CD8-positive, alpha-beta T cell (primary cell): ENCODE measurements at regions of chr15 and their contacts with region 1.

Region 1: DNA sequence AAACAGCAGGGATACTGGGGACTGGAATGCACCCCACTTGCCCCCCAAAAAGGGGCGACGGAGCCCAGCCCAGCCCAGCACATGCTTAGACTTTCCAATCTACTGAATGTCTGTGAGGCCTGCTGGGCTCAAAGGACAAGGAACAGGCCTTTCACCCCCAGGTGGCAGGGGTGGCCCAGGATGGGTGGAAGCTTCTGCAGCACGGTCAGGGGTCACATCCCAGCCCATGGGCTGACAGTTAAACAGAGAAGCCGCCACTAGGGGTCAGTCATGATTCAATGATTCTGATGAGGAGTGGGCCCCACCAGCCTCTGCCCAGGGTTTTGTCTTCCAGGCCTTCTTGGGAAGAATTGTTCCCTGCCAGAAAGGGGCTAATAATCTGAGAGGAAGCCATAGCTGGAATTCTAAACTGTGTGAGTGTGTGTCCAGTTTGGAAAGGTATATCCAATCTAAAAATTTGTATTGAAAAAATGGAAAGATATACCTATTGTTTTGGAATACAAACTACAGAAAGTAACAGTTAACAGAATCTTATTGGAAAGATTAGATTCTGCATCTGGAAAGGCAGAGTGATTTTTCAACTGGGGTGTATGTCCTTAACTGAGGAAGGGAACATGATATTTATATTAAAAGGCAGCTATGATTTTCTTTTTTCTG is 2.2 kb downstream of the CHRNB4 start:
- DNase-seq: peak in 6 of 9 experiments; percentile 28 to 57 (median 42)
- ATAC-seq: peak; percentile 58
- H3K4me3 ChIP-seq: no peak overlapping the region
- H3K4me3 Mint-ChIP-seq: no peak overlapping the region
- H3K27ac ChIP-seq: no peak overlapping the region
- H3K27ac Mint-ChIP-seq: no peak overlapping the region
- H3K4me1 ChIP-seq: peaks cover 13% of the 10 kb centered on the region
- H3K4me1 Mint-ChIP-seq: peaks cover 8% of the 10 kb centered on the region
- H3K27me3 ChIP-seq: peaks cover 0 to 7% of the 10 kb centered on the region in 2 experiments
- H3K27me3 Mint-ChIP-seq: peaks cover 12% of the 10 kb centered on the region
- CTCF ChIP-seq: peak; percentile 47

Region 2: DNA sequence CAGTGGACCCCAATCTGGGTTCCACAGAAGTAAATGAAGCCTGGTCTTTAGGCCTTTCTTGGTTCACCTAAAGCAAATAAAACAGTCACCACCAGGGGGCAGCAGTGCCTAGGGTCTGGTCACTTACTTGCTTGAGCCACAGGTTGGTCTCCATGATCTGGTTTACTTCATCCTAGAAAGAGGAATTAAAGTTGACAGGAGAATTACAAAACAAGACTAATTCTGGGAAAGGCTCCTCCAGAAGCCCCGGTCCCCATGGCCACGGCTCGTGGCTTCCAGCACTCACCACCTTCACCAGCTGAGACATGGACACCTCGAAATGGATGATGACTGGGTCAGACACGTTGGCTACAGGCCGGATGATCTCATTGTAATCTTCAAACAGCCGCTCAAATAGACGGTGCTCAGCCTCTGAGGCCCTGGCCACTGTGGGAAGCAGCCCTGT is 20.3 kb before region 1 on chr15:
- CTCF ChIA-PET with region 1: interaction called, 11 read pairs
- POLR2A ChIA-PET with region 1: no interaction called
- intact Hi-C with region 1: no loop called
- DNase-seq: peak; percentile 56 to 88 (median 78)
- ATAC-seq: no peak
- H3K4me3 ChIP-seq: no peak overlapping the region
- H3K4me3 Mint-ChIP-seq: no peak overlapping the region
- H3K27ac ChIP-seq: no peak overlapping the region
- H3K27ac Mint-ChIP-seq: no peak overlapping the region
- H3K4me1 ChIP-seq: peaks cover 9% of the 10 kb centered on the region
- H3K4me1 Mint-ChIP-seq: peaks cover 16% of the 10 kb centered on the region
- H3K27me3 ChIP-seq: peaks cover 5 to 6% of the 10 kb centered on the region in 2 experiments
- H3K27me3 Mint-ChIP-seq: peaks cover 30% of the 10 kb centered on the region
- CTCF ChIP-seq: peak; percentile 72

Region 3: GRCh38 chr15:79071901-79072300 is 433.1 kb after region 1 on chr15:
- CTCF ChIA-PET with region 1: no interaction called
- POLR2A ChIA-PET with region 1: no interaction called
- intact Hi-C with region 1: no loop called
- DNase-seq: no peak
- ATAC-seq: no peak
- H3K4me3 ChIP-seq: no peak overlapping the region
- H3K4me3 Mint-ChIP-seq: no peak overlapping the region
- H3K27ac ChIP-seq: no peak overlapping the region
- H3K27ac Mint-ChIP-seq: no peak overlapping the region
- H3K4me1 ChIP-seq: no peaks in the 10 kb centered on the region
- H3K4me1 Mint-ChIP-seq: no peaks in the 10 kb centered on the region
- H3K27me3 ChIP-seq: no peaks in the 10 kb centered on the region
- H3K27me3 Mint-ChIP-seq: peaks cover 2% of the 10 kb centered on the region
- CTCF ChIP-seq: no peak